ENCODE measurements at regions of chr11 and their contacts with region 1.

Region 1: GRCh38 chr11:87722756-87723565 is 452.3 kb downstream of the RAB38 start:
- DNase-seq: peak; percentile 68
- H3K4me3 ChIP-seq: no peak overlapping the region
- H3K27ac ChIP-seq: no peak overlapping the region
- H3K4me1 ChIP-seq: no peaks in the 10 kb centered on the region
- H3K27me3 ChIP-seq: peaks cover 24% of the 10 kb centered on the region
- CTCF ChIP-seq: peak; percentile 95

Region 2: DNA sequence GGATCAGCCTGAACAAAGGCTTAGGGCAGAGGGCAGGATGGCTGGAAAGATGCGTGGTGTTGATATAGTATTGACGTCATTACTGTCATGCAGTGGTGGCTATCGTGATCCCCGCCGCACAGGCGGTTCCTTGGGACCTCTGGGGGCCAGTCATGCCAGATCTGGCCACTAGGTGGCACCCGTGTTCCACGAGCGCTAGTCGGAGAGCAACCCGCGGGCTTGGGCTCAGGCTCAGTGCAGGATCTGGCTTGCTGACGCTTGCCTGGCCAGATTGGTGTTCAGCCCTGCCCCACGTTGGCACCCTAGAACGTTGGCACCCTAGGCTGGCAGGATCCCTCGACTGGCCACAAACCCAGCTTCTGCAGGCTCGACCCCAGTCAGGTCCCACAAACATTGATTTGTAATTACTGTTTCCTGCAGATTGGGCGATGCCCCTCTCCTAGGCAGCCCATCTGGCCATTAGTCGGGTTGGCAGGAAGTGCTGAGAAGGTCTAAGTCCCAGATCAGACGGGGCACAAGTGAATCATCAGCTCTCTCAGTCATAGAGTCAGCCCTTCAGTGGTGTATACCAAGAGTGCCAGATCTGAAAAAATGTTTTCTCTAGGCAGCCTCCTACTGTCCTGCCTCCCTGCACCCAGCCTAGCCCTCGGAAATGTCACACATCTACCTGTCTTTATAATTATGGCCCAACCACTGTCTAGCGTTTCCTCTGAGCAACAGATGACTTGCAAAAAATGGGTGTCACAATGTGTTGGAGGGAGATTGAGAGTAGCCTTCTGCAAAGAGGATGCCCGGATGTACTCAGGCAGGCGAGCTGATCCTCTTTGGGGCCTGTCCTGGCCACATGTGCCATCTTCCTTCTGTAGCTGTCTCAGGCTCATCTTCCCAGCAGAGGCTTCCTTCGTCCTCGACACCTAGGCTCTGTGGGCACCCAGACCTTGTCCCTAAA is 369.9 kb before region 1 on chr11:
- CTCF ChIA-PET with region 1: no interaction called
- POLR2A ChIA-PET with region 1: no interaction called
- intact Hi-C with region 1: loop called (anchors 10 kb)
- DNase-seq: peak; percentile 92
- H3K4me3 ChIP-seq: no peak overlapping the region
- H3K27ac ChIP-seq: no peak overlapping the region
- H3K4me1 ChIP-seq: no peaks in the 10 kb centered on the region
- H3K27me3 ChIP-seq: no peaks in the 10 kb centered on the region
- CTCF ChIP-seq: peak; percentile 100

Region 3: DNA sequence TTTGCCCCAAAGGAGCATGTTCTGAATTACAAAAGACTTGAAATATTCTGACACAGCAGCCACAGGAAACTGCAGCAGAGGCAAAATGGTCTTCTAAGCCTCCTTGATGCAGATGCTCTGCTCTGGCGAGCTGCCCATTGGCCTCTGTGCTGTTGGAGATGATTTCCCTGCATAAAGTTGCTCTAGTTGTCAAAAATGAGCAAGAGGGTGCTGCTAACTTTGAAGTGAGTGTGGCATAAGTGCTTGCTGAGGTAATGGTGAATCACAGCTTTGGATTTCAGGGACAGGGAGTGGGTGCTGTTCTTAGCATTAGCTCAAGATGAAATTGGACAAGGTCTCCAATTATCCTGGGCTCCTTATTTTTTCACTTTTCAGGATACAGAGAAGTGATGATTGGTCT is 249.8 kb before region 1 on chr11:
- CTCF ChIA-PET with region 1: no interaction called
- POLR2A ChIA-PET with region 1: no interaction called
- intact Hi-C with region 1: loop called (anchors 5 kb)
- DNase-seq: peak; percentile 26
- H3K4me3 ChIP-seq: no peak overlapping the region
- H3K27ac ChIP-seq: no peak overlapping the region
- H3K4me1 ChIP-seq: no peaks in the 10 kb centered on the region
- H3K27me3 ChIP-seq: peaks cover 3% of the 10 kb centered on the region
- CTCF ChIP-seq: no peak

Region 4: DNA sequence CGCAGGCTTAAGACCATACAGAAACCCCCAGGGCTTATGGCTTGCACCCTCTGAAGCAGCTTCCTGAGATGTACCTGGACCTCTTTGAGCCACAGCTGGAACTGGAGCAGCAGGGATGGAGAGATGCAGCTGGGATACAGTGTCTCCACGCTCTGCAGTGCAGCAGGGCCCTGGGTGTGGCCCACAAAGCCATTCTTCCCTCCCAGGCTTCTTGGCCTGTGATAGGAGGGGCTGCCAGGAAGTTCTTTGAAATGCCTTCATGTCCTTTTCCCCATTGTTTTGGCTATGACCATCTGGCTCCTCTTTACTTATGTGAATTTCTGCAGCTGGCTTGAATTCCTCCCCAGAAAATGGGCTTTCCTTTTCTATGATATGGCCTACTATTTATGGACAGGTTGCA is 489.3 kb after region 1 on chr11:
- CTCF ChIA-PET with region 1: no interaction called
- POLR2A ChIA-PET with region 1: no interaction called
- intact Hi-C with region 1: no loop called
- DNase-seq: no peak
- H3K4me3 ChIP-seq: no peak overlapping the region
- H3K27ac ChIP-seq: no peak overlapping the region
- H3K4me1 ChIP-seq: no peaks in the 10 kb centered on the region
- H3K27me3 ChIP-seq: no peaks in the 10 kb centered on the region
- CTCF ChIP-seq: no peak

Measured in A673 (cell line).